ENCODE measurements at regions of chr17 and their contacts with region 1.

Region 1: DNA sequence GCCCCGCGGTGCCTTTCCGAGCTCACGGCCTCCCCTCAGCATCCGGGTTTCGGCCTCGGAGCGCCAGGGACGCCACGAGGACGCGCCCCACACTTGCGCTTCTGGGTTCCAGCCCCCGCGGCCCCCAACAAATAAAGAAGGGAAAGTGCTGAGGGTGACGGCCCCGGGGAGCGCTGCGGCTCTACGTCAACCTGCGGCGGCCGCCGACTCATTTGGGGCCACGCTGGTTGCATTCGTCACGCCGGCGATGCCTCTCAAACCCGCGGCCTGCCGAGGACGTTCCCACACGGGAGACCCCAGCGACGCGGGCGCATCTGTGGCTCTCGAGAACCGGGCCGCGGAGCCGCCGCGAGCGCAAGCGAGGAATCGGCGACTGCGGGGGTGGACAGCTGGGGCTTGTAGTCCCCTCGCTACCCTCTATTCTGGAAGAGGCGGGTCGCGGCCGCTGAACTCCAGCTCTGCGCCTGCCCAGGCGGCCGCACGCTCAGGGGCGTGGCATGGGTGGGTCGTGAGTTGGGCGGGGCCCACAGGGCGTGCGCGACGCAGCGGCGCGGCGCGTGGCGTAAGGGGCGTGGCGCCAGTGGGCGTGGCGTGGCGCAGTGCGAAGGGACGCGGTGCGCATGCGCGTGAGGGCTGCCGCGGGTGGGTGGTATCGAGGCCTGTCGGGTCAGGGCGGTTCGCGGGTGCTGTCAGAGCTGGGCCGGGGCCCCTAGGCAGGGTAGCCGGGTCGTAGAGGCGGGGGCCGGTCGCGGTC is at the start of gene AMZ2:
- DNase-seq: peak; percentile 94 to 97 (median 96)
- ATAC-seq: peak; percentile 99
- H3K4me3 ChIP-seq: peak within 1 kb of the TSS; percentile 77
- H3K27ac ChIP-seq: peak within 1 kb of the TSS; percentile 84
- H3K4me1 ChIP-seq: peaks cover 8 to 26% of the 10 kb centered on the region in 2 experiments; a peak in 3 of 5 replicates
- H3K27me3 ChIP-seq: no peaks in the 10 kb centered on the region
- CTCF ChIP-seq: no peak
- EP300 ChIP-seq: no peak
- POLR2A ChIP-seq: peak; percentile 92
- RAD21 ChIP-seq: no peak
- polyA plus RNA-seq, gene AMZ2: 56.9 to 74.5 TPM

Region 2: DNA sequence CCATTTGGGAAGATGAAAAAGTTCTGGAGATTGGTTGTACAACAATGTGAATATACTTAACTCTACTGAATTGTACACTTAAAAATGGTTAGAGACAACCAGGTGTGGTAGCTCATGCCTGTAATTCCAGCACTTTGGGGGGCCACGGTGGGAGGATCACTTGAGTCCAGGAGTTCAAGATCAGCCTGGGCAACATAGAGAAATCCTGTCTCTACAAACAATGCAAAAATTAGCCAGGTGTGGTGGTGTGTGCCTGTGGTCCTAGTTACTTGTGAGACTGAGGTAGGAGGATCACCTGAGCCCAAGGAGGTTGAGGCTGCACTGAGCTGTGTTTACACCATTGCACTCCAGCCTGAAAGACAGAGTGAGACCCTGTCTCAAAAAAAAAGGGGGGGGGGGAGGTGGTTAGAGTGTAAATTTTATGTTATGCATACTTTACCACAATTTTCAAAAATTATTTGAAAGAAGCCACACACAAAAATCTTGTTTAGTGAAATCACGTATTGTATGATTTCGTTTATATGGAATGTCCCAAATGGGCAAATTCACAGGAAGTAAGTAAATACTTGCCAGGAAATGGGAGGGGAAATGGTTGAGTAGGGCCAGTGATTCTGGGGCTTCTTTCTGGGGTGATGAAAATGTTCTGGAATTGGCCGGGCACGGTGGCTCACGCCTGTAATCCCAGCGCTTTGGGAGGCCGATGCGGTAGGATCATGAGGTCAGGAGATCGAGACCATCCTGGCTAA is 36.9 kb before region 1 on chr17:
- CTCF ChIA-PET with region 1: no interaction called
- POLR2A ChIA-PET with region 1: no interaction called
- in situ Hi-C with region 1: no loop called
- intact Hi-C with region 1: loop called (anchors 5 kb)
- DNase-seq: no peak
- ATAC-seq: no peak
- H3K4me3 ChIP-seq: no peak overlapping the region
- H3K27ac ChIP-seq: no peak overlapping the region
- H3K4me1 ChIP-seq: peaks cover 0 to 7% of the 10 kb centered on the region in 2 experiments; a peak in 3 of 5 replicates
- H3K27me3 ChIP-seq: peaks cover 3 to 5% of the 10 kb centered on the region in 2 experiments; a peak in 2 of 5 replicates
- CTCF ChIP-seq: no peak
- EP300 ChIP-seq: no peak
- POLR2A ChIP-seq: no peak
- RAD21 ChIP-seq: no peak

Region 3: GRCh38 chr17:68377862-68378770 is 130.5 kb after region 1 on chr17:
- CTCF ChIA-PET with region 1: no interaction called
- POLR2A ChIA-PET with region 1: no interaction called
- in situ Hi-C with region 1: no loop called
- intact Hi-C with region 1: no loop called
- DNase-seq: no peak
- ATAC-seq: no peak
- H3K4me3 ChIP-seq: no peak overlapping the region
- H3K27ac ChIP-seq: no peak overlapping the region
- H3K4me1 ChIP-seq: no peaks in the 10 kb centered on the region
- H3K27me3 ChIP-seq: peaks cover 30 to 38% of the 10 kb centered on the region in 2 experiments
- CTCF ChIP-seq: no peak
- EP300 ChIP-seq: no peak
- POLR2A ChIP-seq: no peak
- RAD21 ChIP-seq: no peak

Region 4: GRCh38 chr17:68391561-68392268 is 144.1 kb after region 1 on chr17:
- CTCF ChIA-PET with region 1: no interaction called
- POLR2A ChIA-PET with region 1: no interaction called
- in situ Hi-C with region 1: no loop called
- intact Hi-C with region 1: no loop called
- DNase-seq: no peak
- ATAC-seq: no peak
- H3K4me3 ChIP-seq: no peak overlapping the region
- H3K27ac ChIP-seq: no peak overlapping the region
- H3K4me1 ChIP-seq: no peaks in the 10 kb centered on the region
- H3K27me3 ChIP-seq: peaks cover 22 to 63% of the 10 kb centered on the region in 2 experiments; a peak in 3 of 5 replicates
- CTCF ChIP-seq: no peak
- EP300 ChIP-seq: no peak
- POLR2A ChIP-seq: no peak
- RAD21 ChIP-seq: no peak